Activated CD4-positive, alpha-beta memory T cell treated with anti-CD3 and anti-CD28 coated beads, Interleukin-2, amount 10 ng/mL, durations not matched to agents 7 days and 5 days (primary cell): ENCODE measurements at regions of chr5 and their contacts with region 1.

Region 1: DNA sequence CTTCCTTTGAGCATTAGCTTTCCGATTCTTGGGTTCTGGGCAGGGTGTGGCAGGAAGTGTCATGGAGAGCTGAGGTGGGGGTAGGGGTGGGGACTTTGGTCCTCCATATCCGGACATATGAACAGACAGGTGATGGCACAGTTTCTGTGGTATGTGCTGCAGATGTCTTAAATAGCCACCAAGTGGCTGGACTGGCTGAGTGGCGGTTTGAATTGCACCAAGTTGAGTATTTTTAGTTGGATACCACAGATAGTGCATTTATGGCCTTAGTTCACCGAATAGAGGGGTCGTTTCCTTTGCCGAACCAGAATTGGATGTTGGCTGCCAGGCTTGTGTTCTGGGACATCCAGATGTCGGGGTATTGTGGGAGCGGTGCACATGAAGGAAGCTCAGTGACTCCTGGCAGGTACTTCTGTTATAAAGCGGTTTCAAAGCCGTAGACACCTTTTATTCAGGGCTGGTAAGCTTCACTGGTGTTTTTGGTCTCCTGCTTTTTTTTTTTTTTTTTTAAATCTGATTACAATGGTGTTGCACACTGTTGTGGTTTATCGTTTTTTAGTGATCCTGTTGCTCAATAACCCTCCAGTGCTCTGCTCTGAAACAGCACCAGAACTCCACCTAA is 15.1 kb upstream of the TNFAIP8 start:
- DNase-seq: peak; percentile 85
- H3K4me3 Mint-ChIP-seq: peak overlapping the region; percentile 77
- H3K27ac Mint-ChIP-seq: peak overlapping the region; percentile 94
- H3K4me1 Mint-ChIP-seq: peaks cover 90% of the 10 kb centered on the region
- H3K27me3 Mint-ChIP-seq: no peaks in the 10 kb centered on the region

Region 2: DNA sequence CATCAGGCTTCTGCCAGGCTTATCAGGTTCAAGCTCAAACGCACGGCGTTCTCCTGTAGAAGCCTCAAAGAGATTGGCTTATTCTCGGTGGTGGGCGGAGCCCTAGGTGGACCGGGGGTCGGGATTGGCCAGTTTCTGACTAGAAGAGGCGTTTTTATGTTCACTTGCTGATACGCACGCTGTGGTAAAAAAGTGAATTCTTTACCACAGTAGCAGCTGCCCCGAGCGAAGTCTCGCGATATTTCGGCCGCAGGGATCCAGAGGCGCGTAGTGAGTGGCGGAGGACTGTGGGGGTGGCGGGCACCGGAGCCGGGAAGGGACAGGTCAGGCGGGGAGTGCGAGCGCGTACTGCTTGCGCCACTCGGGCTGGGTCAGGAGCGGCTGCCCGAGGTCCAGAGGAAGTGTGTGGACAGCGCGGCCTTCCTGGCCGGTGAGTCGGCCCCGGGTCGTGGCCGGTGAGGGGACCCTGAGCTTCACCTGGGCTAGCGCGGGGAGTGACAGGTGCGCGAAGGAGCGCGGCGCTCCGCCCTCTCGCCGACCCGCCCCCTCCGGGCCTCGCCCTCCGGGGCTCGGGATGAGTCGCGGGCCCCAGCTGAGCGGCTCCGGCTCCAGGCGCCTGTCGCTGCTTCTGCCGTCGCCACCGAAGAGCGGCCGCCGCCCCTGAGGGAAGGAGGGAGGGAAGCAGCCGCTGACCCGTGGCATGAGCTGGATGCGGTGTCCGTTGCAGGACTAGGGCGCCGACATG is 269.7 kb before region 1 on chr5 and contains the start of gene DMXL1:
- CTCF ChIA-PET with region 1: interaction called, 7 read pairs
- POLR2A ChIA-PET with region 1: interaction called, 34 read pairs
- DNase-seq: peak; percentile 99
- H3K4me3 Mint-ChIP-seq: peak within 1 kb of the TSS; percentile 89
- H3K27ac Mint-ChIP-seq: peak within 1 kb of the TSS; percentile 96
- H3K4me1 Mint-ChIP-seq: peaks cover 41% of the 10 kb centered on the region
- H3K27me3 Mint-ChIP-seq: no peaks in the 10 kb centered on the region
- total RNA-seq, gene DMXL1: 31.5 to 33.0 TPM

Region 3: GRCh38 chr5:119179857-119180641 is 160.7 kb before region 1 on chr5:
- CTCF ChIA-PET with region 1: no interaction called
- POLR2A ChIA-PET with region 1: no interaction called
- DNase-seq: no peak
- H3K4me3 Mint-ChIP-seq: no peak overlapping the region
- H3K27ac Mint-ChIP-seq: no peak overlapping the region
- H3K4me1 Mint-ChIP-seq: peaks cover 1% of the 10 kb centered on the region
- H3K27me3 Mint-ChIP-seq: no peaks in the 10 kb centered on the region

Region 4: DNA sequence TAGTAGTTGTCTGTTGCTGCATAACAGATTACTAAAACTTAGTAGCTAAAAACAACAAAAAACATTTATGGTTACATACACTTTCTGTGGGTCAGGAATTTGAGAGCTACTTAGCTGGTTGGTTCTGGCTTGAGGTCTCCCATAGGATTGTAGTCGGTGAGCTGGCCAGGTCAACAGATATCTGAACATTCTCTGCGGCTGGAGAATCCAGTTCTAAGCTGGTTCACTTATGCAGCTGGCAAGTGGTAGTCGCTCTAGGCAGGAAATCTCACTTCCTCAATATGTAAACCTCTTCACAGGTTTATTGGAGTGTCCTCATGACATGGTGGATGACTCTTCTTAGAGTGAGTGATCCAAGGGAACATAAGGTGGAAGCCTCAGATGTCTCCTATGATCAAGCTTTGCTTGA is 50.5 kb before region 1 on chr5:
- CTCF ChIA-PET with region 1: interaction called, 5 read pairs
- POLR2A ChIA-PET with region 1: interaction called, 23 read pairs
- DNase-seq: no peak
- H3K4me3 Mint-ChIP-seq: peak overlapping the region; percentile 56
- H3K27ac Mint-ChIP-seq: peak overlapping the region; percentile 80
- H3K4me1 Mint-ChIP-seq: peaks cover 85% of the 10 kb centered on the region
- H3K27me3 Mint-ChIP-seq: no peaks in the 10 kb centered on the region

Region 5: GRCh38 chr5:119315516-119315949 is 25.2 kb before region 1 on chr5:
- CTCF ChIA-PET with region 1: interaction called, 77 read pairs
- POLR2A ChIA-PET with region 1: interaction called, 196 read pairs
- DNase-seq: peak; percentile 63
- H3K4me3 Mint-ChIP-seq: peak overlapping the region; percentile 21
- H3K27ac Mint-ChIP-seq: peak overlapping the region; percentile 77
- H3K4me1 Mint-ChIP-seq: peaks cover 94% of the 10 kb centered on the region
- H3K27me3 Mint-ChIP-seq: no peaks in the 10 kb centered on the region

Region 6: GRCh38 chr5:119328753-119329602 is 11.7 kb before region 1 on chr5:
- CTCF ChIA-PET with region 1: interaction called, 35 read pairs
- POLR2A ChIA-PET with region 1: interaction called, 234 read pairs
- DNase-seq: peak; percentile 73
- H3K4me3 Mint-ChIP-seq: peak overlapping the region; percentile 36
- H3K27ac Mint-ChIP-seq: peak overlapping the region; percentile 87
- H3K4me1 Mint-ChIP-seq: peaks cover 85% of the 10 kb centered on the region
- H3K27me3 Mint-ChIP-seq: no peaks in the 10 kb centered on the region

Region 7: DNA sequence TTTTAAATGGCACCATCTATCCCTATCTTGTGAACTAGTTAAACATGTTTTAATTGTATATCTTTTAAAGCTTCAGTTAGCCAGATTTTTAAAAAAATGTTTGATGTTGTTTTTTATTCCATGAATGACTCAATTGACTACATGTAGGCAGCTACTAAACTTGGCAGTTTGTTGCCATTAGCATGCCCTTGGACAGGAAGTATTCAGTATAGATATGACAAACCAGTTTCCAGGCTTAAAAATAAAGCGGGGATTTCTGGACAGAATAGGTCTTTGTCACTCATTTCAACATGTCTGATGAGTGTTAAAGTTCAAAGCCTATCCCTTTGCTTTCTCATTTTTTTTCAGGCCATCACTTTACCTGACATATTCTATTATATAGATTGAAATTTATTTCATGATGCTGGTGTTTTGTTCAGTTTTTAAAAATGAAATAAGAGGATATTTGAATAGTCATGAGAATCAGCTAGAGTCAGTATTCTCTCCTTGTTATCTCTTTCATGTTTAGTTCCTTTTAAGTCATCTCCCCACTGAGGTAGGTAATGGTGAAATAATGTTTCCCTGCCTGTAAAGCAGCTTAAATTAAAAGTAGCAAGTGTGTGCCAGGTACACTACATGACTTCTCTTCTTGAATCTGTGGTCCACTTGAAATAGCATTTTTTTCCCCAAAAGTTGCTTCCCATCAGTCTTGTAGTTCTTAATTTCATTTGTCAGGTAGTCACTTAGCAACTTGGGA is 27.0 kb after region 1 on chr5:
- CTCF ChIA-PET with region 1: interaction called, 11 read pairs
- POLR2A ChIA-PET with region 1: interaction called, 779 read pairs
- DNase-seq: no peak
- H3K4me3 Mint-ChIP-seq: peak overlapping the region; percentile 36
- H3K27ac Mint-ChIP-seq: peak overlapping the region; percentile 81
- H3K4me1 Mint-ChIP-seq: peaks cover 82% of the 10 kb centered on the region
- H3K27me3 Mint-ChIP-seq: no peaks in the 10 kb centered on the region

Region 8: GRCh38 chr5:119385136-119385535 is 44.4 kb after region 1 on chr5:
- CTCF ChIA-PET with region 1: no interaction called
- POLR2A ChIA-PET with region 1: no interaction called
- DNase-seq: no peak
- H3K4me3 Mint-ChIP-seq: no peak overlapping the region
- H3K27ac Mint-ChIP-seq: no peak overlapping the region
- H3K4me1 Mint-ChIP-seq: peaks cover 74% of the 10 kb centered on the region
- H3K27me3 Mint-ChIP-seq: no peaks in the 10 kb centered on the region

Region 9: GRCh38 chr5:119527351-119527750 is 186.6 kb after region 1 on chr5:
- CTCF ChIA-PET with region 1: no interaction called
- POLR2A ChIA-PET with region 1: no interaction called
- DNase-seq: no peak
- H3K4me3 Mint-ChIP-seq: no peak overlapping the region
- H3K27ac Mint-ChIP-seq: no peak overlapping the region
- H3K4me1 Mint-ChIP-seq: no peaks in the 10 kb centered on the region
- H3K27me3 Mint-ChIP-seq: no peaks in the 10 kb centered on the region